Panc1 (cell line): ENCODE measurements at regions of chr14 and their contacts with region 1.

Region 1: DNA sequence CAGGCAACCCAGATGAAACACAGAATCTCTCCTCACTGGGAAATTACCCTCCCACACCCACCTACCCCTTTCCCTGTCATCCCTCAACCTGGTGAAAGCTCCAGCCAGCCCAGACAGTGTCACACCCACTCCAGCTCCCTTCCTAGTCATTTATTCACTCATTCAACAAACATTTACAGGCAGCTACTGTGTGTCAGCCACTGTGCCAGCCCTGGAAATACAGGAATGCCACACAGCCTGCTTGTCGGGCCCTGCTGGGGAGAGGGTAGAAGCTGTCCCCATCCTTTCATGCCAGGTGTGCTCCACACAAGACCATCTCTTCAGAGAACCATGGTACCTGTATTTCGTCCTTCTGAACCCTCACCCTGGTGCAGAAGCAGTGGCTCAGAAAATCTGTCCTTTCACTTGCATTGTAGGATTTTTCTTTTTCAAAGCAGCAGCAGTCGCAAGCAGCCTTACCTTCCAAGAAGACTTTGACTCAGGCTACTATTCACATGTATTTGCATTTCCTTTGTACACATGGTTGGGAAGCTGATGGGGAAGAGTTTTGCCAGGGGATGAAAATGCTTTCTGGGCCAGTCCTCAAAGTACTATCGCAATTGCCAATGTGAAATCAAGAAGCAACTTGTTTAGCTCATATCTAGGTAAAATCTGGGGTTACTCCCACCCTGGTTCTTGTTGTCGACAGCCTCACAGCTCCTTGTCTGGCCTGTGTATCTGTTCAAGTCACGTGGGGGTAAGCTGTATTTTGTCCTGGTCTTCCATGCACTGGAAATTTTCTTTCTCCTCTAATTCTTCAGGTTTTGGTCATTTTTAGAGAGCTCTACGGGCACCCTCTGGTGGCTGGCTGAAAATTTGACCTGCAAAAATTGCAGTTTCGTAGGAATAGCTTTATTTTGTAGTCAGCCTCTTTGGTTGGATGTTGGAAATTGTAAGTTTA is 147.4 kb upstream of the EGLN3 start:
- DNase-seq: no peak
- ATAC-seq: no peak
- H3K4me3 ChIP-seq: no peak overlapping the region
- H3K27ac ChIP-seq: peak overlapping the region; percentile 29; the same call in 1 of the 2 replicates
- H3K4me1 ChIP-seq: no peaks in the 10 kb centered on the region
- H3K27me3 ChIP-seq: no peaks in the 10 kb centered on the region
- CTCF ChIP-seq: peak; percentile 68

Region 2: GRCh38 chr14:33839193-33840076 is 258.9 kb before region 1 on chr14:
- CTCF ChIA-PET with region 1: interaction called, 4 read pairs
- POLR2A ChIA-PET with region 1: no interaction called
- in situ Hi-C with region 1: no loop called
- intact Hi-C with region 1: loop called (anchors 5 kb)
- DNase-seq: peak; percentile 13
- ATAC-seq: no peak; the same call in 1 of the 2 replicates
- H3K4me3 ChIP-seq: no peak overlapping the region
- H3K27ac ChIP-seq: no peak overlapping the region
- H3K4me1 ChIP-seq: no peaks in the 10 kb centered on the region
- H3K27me3 ChIP-seq: no peaks in the 10 kb centered on the region
- CTCF ChIP-seq: peak; percentile 77

Region 3: DNA sequence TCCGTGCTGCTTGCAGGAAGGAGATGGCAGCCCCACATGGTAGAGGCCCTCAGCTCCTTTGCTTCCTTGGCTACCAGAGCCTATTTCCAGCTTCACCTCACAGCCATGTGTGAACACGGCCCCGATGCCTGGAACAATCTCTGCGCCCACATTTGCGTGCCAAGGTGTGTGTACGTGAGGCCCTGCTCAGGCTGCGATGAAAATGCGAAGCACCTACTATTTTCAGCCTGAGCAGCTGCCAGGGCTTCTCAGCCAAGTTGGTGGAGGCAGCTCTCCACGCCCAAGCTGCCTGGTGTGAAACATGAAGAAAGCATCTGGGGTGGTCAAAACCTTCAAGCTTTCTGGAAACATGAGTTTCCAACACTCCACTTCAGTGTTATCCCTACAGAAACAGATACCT is 30.4 kb after region 1 on chr14:
- CTCF ChIA-PET with region 1: no interaction called
- POLR2A ChIA-PET with region 1: no interaction called
- in situ Hi-C with region 1: no loop called
- intact Hi-C with region 1: no loop called
- DNase-seq: no peak
- ATAC-seq: no peak
- H3K4me3 ChIP-seq: no peak overlapping the region
- H3K27ac ChIP-seq: no peak overlapping the region
- H3K4me1 ChIP-seq: no peaks in the 10 kb centered on the region
- H3K27me3 ChIP-seq: no peaks in the 10 kb centered on the region
- CTCF ChIP-seq: no peak